A673 (cell line): ENCODE measurements at regions of chr3 and their contacts with region 1.

Region 1: DNA sequence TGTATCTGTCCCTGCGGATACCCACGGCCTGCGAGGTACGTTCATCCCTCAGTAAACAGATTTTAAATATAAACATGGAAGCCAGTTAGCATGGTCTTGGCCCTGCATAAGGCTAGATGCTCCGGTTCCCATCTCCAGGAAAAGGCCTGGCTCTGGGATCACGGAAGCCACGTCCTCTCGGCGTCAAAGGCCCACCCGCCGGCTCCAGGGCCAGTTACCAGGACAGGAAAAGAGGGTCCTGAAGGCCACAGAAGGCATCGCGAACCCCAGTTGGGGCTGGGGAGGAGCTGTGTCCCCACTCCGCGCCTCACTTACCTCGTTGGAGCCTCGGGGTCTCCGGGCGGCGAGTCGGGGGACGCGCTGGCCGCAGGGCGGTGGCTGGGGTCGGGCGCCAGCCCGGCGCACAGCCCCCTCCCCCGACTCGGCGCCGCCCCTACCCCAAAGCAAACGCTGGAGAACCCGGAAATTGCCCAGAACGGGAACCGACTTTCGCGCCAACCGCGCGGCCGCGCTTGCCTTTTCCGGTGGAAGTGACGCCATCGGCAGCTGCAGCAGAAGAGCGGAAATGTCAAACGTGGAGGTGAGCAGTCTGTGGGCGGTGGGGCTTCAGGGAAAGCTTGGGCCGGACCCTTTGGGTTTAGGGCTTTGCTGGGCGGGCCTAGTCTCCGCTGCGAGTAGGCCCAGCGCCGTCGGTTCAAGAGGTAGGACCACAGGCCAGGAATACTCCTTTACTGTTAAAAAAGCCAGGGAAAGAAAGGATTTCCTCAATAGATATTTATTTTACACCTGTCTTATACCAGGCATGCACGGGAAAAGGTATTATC is at the start of gene TOPBP1:
- DNase-seq: peak; percentile 87
- H3K4me3 ChIP-seq: peak within 1 kb of the TSS; percentile 87
- H3K27ac ChIP-seq: peak within 1 kb of the TSS; percentile 93
- H3K4me1 ChIP-seq: peaks cover 11% of the 10 kb centered on the region
- H3K27me3 ChIP-seq: no peaks in the 10 kb centered on the region
- CTCF ChIP-seq: no peak
- total RNA-seq, gene TOPBP1: 56.8 and 59.8 TPM in 2 replicates

Region 2: DNA sequence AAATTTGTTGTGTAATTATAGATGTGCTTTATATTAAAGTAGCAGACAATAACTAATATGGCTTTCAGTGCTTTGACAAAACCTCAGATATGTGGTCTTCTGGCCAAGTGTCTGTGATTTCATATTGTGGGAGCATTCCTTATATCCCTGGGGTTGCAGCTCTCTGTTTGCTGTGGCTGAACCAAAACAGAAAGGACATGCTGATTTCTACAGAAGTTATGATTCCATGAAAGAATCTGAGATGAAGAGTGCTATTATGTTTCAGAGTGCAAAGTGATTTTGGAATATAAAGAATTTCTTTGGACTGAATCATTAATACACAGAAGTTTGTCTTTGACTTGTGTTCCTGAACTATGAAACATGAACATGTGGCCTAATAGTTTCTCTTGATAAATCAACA is 51.6 kb before region 1 on chr3:
- CTCF ChIA-PET with region 1: no interaction called
- POLR2A ChIA-PET with region 1: no interaction called
- intact Hi-C with region 1: no loop called
- DNase-seq: no peak
- H3K4me3 ChIP-seq: no peak overlapping the region
- H3K27ac ChIP-seq: no peak overlapping the region
- H3K4me1 ChIP-seq: peaks cover 7% of the 10 kb centered on the region
- H3K27me3 ChIP-seq: no peaks in the 10 kb centered on the region
- CTCF ChIP-seq: no peak

Region 3: GRCh38 chr3:133805527-133806475 is 144.1 kb after region 1 on chr3 and contains the start of gene SRPRB:
- CTCF ChIA-PET with region 1: no interaction called
- POLR2A ChIA-PET with region 1: no interaction called
- intact Hi-C with region 1: loop called (anchors 2 kb)
- DNase-seq: peak; percentile 96
- H3K4me3 ChIP-seq: peak within 1 kb of the TSS; percentile 92
- H3K27ac ChIP-seq: peak within 1 kb of the TSS; percentile 28
- H3K4me1 ChIP-seq: no peaks in the 10 kb centered on the region
- H3K27me3 ChIP-seq: peaks cover 2% of the 10 kb centered on the region
- CTCF ChIP-seq: no peak
- total RNA-seq, gene SRPRB: 52.1 and 64.2 TPM in 2 replicates

Region 4: GRCh38 chr3:133991637-133992036 is 330.0 kb after region 1 on chr3:
- CTCF ChIA-PET with region 1: no interaction called
- POLR2A ChIA-PET with region 1: no interaction called
- intact Hi-C with region 1: no loop called
- DNase-seq: no peak
- H3K4me3 ChIP-seq: no peak overlapping the region
- H3K27ac ChIP-seq: no peak overlapping the region
- H3K4me1 ChIP-seq: no peaks in the 10 kb centered on the region
- H3K27me3 ChIP-seq: peaks cover 4% of the 10 kb centered on the region
- CTCF ChIP-seq: no peak